ENCODE measurements at regions of chr12 and their contacts with region 1.

Region 1: DNA sequence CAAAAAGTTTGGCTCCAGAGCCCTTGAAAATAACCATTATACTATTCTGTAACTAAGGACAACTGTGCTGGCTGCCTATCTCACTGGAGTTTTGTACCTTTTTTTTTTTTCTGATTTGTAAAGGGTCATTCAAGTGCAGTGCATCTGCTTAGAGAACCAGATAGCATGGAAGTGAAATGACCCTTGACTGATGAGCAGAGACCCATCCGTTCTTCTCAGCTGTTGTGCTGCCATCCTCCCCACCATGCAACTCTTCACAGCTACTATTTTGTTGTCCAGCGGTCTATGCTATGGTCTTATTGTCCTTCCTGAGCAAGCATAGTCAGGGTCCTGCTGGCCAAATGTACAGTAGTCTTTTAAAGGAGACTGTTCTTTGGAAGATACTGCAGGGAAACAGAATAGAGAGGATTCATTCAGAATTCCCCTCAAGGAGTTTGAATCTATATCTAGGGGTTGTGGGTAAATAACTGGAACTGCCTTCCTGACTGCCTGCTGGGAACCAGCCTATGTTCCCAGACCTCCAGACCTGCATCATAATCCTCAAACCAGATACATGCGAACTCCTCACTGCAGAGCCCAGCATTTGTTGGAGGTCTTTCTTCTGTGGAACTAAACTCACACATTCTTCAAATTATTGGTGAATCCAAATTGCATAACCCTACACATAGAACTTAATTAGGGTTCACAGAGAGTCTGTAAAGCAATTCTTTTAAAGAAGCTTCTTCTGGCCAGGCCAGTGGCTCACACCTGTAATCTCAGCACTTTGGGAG is 41.1 kb downstream of the GPR19 start:
- DNase-seq: no peak
- H3K4me3 ChIP-seq: no peak overlapping the region
- H3K27ac ChIP-seq: no peak overlapping the region
- H3K4me1 ChIP-seq: peaks cover 0 to 4% (median 0%) of the 10 kb centered on the region in 4 donors
- H3K27me3 ChIP-seq: no peaks in the 10 kb centered on the region
- CTCF ChIP-seq: no peak
- EP300 ChIP-seq: no peak
- POLR2A ChIP-seq: no peak

Region 2: DNA sequence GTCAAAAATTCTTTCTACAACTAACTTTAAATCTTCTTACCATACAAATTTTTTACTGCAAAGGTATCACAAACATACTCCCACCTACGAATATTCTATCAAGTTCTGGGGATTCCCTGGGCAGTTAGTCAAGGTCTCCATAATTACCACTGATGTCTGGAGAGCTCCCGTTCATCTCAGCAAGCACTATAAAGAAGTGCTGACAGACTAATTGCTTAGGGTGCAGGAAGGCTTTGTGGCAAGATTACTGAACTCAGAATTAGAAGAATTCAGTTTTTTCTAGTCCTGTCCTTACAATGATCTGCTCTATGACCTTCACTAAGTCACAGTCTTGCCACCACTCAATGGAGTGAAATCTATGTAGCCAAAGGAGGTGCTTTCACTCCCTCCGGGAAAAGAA is 153.8 kb before region 1 on chr12:
- intact Hi-C with region 1: no loop called
- DNase-seq: no peak
- H3K4me3 ChIP-seq: no peak overlapping the region
- H3K27ac ChIP-seq: no peak overlapping the region
- H3K4me1 ChIP-seq: peaks cover 0 to 13% (median 5%) of the 10 kb centered on the region in 4 donors
- H3K27me3 ChIP-seq: no peaks in the 10 kb centered on the region
- CTCF ChIP-seq: no peak
- EP300 ChIP-seq: no peak
- POLR2A ChIP-seq: no peak

Region 3: GRCh38 chr12:12568045-12568444 is 86.8 kb before region 1 on chr12:
- intact Hi-C with region 1: no loop called
- DNase-seq: no peak
- H3K4me3 ChIP-seq: no peak overlapping the region
- H3K27ac ChIP-seq: no peak overlapping the region
- H3K4me1 ChIP-seq: peaks cover 0 to 10% (median 4%) of the 10 kb centered on the region in 4 donors
- H3K27me3 ChIP-seq: no peaks in the 10 kb centered on the region
- CTCF ChIP-seq: no peak
- EP300 ChIP-seq: no peak
- POLR2A ChIP-seq: no peak

Region 4: DNA sequence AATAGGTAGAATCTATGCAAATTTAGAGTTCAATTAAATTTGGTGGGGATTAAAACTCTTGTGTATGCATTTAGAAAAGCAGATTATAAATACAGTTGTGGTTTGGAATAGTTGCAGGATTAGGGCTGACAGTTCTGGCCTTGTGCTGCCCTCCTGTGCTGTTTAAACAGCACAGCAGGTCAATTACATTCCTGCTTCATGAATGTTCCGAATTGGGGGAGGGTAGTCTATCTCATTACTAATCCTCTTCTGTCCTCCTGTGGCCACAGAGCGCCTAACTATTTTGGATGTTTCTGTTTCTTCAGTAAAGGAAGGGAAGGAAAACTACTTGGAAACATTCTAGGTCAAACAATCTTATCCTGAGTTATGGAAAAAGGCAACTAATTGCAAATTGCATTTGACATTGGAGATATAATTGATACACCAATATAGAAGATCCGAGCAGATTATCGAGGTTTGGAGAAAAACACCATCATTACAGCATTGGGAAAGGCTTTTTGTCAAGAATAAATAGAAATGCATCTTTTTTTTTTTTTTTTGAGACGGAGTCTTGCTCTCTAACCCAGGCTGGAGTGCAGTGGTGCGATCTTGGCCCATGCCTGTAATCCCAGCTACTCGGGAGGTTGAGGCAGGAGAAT is 49.8 kb after region 1 on chr12:
- intact Hi-C with region 1: loop called (anchors 5 kb)
- DNase-seq: peak; percentile 79
- H3K4me3 ChIP-seq: no peak overlapping the region
- H3K27ac ChIP-seq: peak overlapping the region in 3 of 4 donors; percentile 25 to 50 (median 43)
- H3K4me1 ChIP-seq: peaks cover 0 to 6% (median 6%) of the 10 kb centered on the region in 4 donors
- H3K27me3 ChIP-seq: no peaks in the 10 kb centered on the region
- CTCF ChIP-seq: peak; percentile 84 to 97 (median 93)
- EP300 ChIP-seq: peak in 1 of 4 donors; percentile 8
- POLR2A ChIP-seq: no peak

Measured in sigmoid colon (tissue), 7 donors.